ENCODE measurements at regions of chr3 and their contacts with region 1.

Region 1: DNA sequence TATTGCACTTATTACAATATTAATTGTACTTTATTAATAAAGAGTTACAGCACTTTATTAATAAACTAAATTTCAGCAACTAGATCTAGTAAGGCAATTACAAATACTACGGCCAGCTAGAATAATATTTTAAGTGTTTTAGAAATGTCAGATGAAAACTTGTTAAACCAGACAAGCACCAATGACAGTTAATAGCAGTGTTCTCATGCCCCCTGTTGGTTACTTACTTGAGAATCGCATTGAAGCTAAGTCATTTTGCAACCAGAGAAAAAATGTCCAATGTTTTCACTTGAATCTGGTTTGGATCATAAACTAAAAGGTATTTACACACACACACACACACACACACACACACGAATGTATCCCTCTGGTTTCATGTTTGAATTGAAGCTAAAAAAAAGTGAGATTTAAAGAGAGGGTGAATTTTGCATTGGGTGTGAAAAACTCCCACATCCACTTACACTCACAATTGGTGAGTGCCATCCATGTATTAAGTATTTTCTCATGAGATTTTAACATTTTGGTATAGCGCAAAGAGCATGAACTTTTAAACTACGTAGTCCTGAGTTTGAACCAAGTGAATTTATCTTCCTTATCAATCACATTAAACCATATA is 347.7 kb downstream of the ZBBX start:
- DNase-seq: peak; percentile 78
- H3K4me3 Mint-ChIP-seq: no peak overlapping the region
- H3K27ac Mint-ChIP-seq: no peak overlapping the region
- H3K4me1 Mint-ChIP-seq: no peaks in the 10 kb centered on the region
- H3K27me3 Mint-ChIP-seq: no peaks in the 10 kb centered on the region
- CTCF ChIP-seq: peak; percentile 57

Region 2: DNA sequence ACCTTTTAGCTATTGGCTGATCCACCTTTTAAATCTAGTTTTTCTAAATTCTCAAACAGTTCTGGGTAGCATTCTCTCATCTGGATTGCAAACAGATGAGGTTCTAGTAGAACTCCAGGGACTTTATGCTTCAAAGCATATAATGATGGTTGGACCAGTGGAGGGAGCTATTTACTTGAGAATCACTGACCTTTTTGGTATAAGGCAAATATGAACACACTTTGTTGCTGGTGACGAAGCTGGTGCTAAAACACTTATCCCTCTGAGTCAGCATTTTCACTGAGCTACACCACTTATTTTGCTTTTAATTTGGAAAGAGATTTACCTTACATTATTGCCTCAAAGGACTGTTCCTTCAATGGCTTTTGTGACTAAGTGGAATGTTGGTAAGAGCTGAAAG is 1777.6 kb before region 1 on chr3:
- CTCF ChIA-PET with region 1: interaction called, 4 read pairs
- POLR2A ChIA-PET with region 1: no interaction called
- intact Hi-C with region 1: loop called (anchors 1 kb)
- DNase-seq: peak; percentile 80
- H3K4me3 Mint-ChIP-seq: no peak overlapping the region
- H3K27ac Mint-ChIP-seq: peak overlapping the region; percentile 25
- H3K4me1 Mint-ChIP-seq: peaks cover 10% of the 10 kb centered on the region
- H3K27me3 Mint-ChIP-seq: no peaks in the 10 kb centered on the region
- CTCF ChIP-seq: peak; percentile 71

Region 3: GRCh38 chr3:165854696-165855095 is 1177.7 kb before region 1 on chr3:
- CTCF ChIA-PET with region 1: interaction called, 6 read pairs
- POLR2A ChIA-PET with region 1: no interaction called
- intact Hi-C with region 1: loop called (anchors 5 kb)
- DNase-seq: peak; percentile 50
- H3K4me3 Mint-ChIP-seq: no peak overlapping the region
- H3K27ac Mint-ChIP-seq: peak overlapping the region; percentile 3
- H3K4me1 Mint-ChIP-seq: peaks cover 25% of the 10 kb centered on the region
- H3K27me3 Mint-ChIP-seq: no peaks in the 10 kb centered on the region
- CTCF ChIP-seq: peak; percentile 41

Region 4: DNA sequence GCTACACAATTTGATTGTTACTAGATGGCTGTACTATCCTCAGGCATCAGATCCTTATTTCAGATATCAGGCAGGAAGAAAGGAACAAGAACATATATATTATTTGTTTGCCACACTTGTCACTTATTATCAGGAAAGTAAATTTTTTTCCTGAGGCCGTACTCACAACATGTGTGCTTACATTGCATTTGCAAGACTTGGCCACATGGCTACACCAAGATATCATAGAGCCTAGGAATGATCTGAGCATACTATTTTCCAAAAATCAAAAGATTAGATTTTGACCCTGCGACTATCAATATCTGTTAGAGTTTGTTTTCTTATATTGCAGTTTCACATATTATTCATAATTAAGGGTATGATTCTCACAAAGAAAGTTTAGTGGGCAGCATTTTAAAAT is 768.9 kb before region 1 on chr3:
- CTCF ChIA-PET with region 1: no interaction called
- POLR2A ChIA-PET with region 1: no interaction called
- intact Hi-C with region 1: loop called (anchors 1 kb)
- DNase-seq: peak; percentile 9
- H3K4me3 Mint-ChIP-seq: no peak overlapping the region
- H3K27ac Mint-ChIP-seq: no peak overlapping the region
- H3K4me1 Mint-ChIP-seq: no peaks in the 10 kb centered on the region
- H3K27me3 Mint-ChIP-seq: no peaks in the 10 kb centered on the region
- CTCF ChIP-seq: no peak

Region 5: GRCh38 chr3:167078070-167078622 is 45.8 kb after region 1 on chr3:
- CTCF ChIA-PET with region 1: no interaction called
- POLR2A ChIA-PET with region 1: no interaction called
- intact Hi-C with region 1: no loop called
- DNase-seq: peak; percentile 10
- H3K4me3 Mint-ChIP-seq: no peak overlapping the region
- H3K27ac Mint-ChIP-seq: no peak overlapping the region
- H3K4me1 Mint-ChIP-seq: peaks cover 8% of the 10 kb centered on the region
- H3K27me3 Mint-ChIP-seq: no peaks in the 10 kb centered on the region
- CTCF ChIP-seq: no peak

Region 6: DNA sequence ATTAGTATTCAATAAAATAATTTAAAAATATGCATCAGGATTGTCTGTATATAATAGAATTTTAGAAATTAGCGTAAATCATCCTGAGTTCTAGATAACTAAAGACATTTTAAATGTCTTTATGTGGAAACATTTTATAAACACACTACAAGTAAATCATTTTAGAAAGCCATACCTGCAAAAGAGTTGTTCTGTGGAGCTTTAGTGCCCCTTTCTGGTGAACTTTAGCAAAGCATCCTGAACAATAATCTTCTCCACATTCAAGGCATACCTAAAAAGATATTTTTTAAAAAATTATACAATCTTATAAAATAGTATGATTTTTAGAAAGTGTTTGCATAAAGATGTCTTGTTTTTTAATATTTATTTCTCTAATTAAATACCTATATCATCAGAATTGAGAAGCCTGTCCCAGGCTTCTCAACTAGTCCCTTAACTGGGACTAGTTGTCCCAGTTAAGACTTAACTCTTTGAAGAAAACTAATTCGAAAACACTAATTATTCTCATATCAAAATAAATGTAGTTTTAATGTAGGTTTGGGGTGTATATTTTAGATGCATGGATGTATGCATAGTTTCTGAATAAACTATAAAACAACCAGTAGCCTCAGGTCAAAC is 318.0 kb after region 1 on chr3:
- CTCF ChIA-PET with region 1: no interaction called
- POLR2A ChIA-PET with region 1: no interaction called
- intact Hi-C with region 1: loop called (anchors 10 kb)
- DNase-seq: peak; percentile 64
- H3K4me3 Mint-ChIP-seq: no peak overlapping the region
- H3K27ac Mint-ChIP-seq: no peak overlapping the region
- H3K4me1 Mint-ChIP-seq: no peaks in the 10 kb centered on the region
- H3K27me3 Mint-ChIP-seq: no peaks in the 10 kb centered on the region
- CTCF ChIP-seq: peak; percentile 76

Measured in MCF 10A (cell line).